ENCODE measurements at regions of chr7 and their contacts with region 1.

Region 1: DNA sequence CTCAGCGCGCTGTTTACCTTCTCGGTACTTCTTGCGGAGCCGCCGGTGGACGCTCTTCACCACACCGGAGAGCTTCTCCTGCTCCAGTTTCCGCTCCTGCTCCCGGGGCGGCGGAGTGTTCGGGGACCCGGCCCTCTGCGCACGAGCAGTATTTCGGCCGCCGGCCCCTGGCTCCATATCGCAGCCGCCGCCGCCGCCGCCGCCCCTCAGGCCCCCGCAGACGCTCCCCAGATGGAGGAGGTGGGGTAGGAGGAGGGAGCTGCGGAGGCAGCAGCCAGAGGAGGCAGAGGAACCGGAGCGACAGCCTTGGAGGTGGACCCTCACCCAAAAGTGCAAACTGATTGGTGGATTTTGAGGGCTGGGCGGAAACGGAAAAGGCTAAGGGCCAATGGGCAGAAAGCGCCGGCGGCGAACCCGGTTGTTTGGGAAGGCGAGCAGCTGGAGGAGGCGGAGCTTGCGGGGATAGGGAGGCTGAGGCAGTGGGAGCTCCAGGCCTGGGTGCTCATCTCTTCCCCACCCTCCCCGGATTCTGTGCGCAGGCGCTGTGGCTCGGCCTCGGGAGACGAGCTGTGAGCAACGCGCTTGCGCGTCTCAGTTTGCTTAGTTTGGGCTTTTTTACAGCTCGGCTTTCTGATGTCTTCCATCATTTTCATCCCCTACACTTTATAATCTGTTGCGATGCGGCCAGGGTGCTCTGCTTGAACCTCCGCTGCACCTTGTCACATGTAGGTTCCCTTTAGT is 146.9 kb downstream of the GPR85 start:
- DNase-seq: peak; percentile 98
- ATAC-seq: peak; percentile 98
- H3K4me3 ChIP-seq: peak overlapping the region; percentile 78 to 86 (median 80)
- H3K27ac ChIP-seq: peak overlapping the region; percentile 54
- H3K4me1 ChIP-seq: peaks cover 22% of the 10 kb centered on the region
- H3K27me3 ChIP-seq: no peaks in the 10 kb centered on the region
- CTCF ChIP-seq: peak; percentile 9; the same call in 1 of the 2 replicates
- EP300 ChIP-seq: no peak
- POLR2A ChIP-seq: peak; percentile 65 to 68
- RAD21 ChIP-seq: no peak

Region 2: GRCh38 chr7:112789817-112790585 is 149.7 kb before region 1 on chr7 and contains the start of gene TMEM168:
- CTCF ChIA-PET with region 1: no interaction called
- POLR2A ChIA-PET with region 1: interaction called, 7 read pairs
- in situ Hi-C with region 1: no loop called
- intact Hi-C with region 1: loop called (anchors 5 kb)
- DNase-seq: peak; percentile 63
- ATAC-seq: peak; percentile 86
- H3K4me3 ChIP-seq: peak within 1 kb of the TSS; percentile 67 to 78 (median 73)
- H3K27ac ChIP-seq: peak within 1 kb of the TSS; percentile 93
- H3K4me1 ChIP-seq: peaks cover 22% of the 10 kb centered on the region
- H3K27me3 ChIP-seq: peaks cover 0 to 2% of the 10 kb centered on the region in 2 experiments; a peak in 1 of 5 replicates
- CTCF ChIP-seq: peak; percentile 25; the same call in 1 of the 2 replicates
- EP300 ChIP-seq: no peak
- POLR2A ChIP-seq: peak; percentile 50 to 74; a peak in 3 of 4 replicates
- RAD21 ChIP-seq: no peak; the same call in 1 of the 2 replicates
- total RNA-seq, gene TMEM168: 5.7 and 8.7 TPM in 2 replicates

Region 3: GRCh38 chr7:112898432-112899290 is 41.1 kb before region 1 on chr7:
- CTCF ChIA-PET with region 1: no interaction called
- POLR2A ChIA-PET with region 1: no interaction called
- in situ Hi-C with region 1: no loop called
- intact Hi-C with region 1: loop called (anchors 1 kb)
- DNase-seq: peak; percentile 79
- ATAC-seq: peak; percentile 92
- H3K4me3 ChIP-seq: peak overlapping the region in 1 of 3 experiments; percentile 35; a peak in 1 of 6 replicates
- H3K27ac ChIP-seq: peak overlapping the region; percentile 80
- H3K4me1 ChIP-seq: peaks cover 39% of the 10 kb centered on the region
- H3K27me3 ChIP-seq: no peaks in the 10 kb centered on the region
- CTCF ChIP-seq: peak; percentile 82
- EP300 ChIP-seq: 0 out of 4 replicates have a peak, but pooled peaks of 1 of the 2 experiments have one; percentile 21
- POLR2A ChIP-seq: no peak
- RAD21 ChIP-seq: peak; percentile 80

Region 4: DNA sequence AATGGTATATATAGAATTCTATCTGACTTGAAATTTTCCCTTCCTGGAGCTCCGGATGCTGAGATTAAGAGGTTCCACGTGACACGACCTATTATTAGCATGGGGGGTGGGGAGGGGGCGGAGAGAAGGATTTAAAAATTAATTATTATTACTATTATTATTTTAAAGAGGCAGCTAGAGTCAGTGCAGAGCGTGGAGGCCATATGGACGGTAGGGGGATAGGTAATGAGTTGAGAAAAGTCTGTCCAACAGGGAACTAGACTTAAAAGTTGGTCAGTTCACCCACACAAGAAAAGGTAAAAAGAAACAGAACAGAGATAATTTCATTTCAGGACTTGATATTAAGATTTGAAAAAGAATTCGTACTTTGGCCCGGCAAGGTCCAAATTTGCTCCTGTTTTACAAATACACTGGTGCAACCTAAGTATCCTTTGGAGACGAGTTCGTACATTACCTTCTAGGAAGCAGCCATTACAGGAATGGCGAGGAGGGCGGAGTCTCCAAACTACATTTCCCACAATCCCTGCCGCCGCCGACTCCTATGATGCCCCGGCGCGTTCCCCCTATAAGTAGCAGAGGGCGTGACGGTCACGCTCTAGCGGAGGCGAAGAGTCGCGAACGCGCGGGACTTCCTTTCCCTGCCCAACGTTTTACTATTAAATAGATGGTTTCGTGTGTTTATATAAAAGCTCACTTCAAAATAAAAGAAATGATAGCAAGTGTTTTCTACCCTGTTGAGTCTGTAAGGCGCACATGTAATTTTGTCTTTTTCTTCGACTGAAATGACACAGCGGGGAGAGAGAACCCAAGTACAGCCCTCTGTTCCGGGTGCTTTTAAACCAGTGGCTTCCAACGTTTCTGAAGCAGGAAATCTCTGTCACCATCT is 178.6 kb after region 1 on chr7 and contains the start of gene SMIM30:
- CTCF ChIA-PET with region 1: no interaction called
- POLR2A ChIA-PET with region 1: no interaction called
- in situ Hi-C with region 1: no loop called
- intact Hi-C with region 1: loop called (anchors 10 kb)
- DNase-seq: peak; percentile 80
- ATAC-seq: peak; percentile 100
- H3K4me3 ChIP-seq: peak within 1 kb of the TSS; percentile 73 to 82 (median 75)
- H3K27ac ChIP-seq: no peak within 1 kb of the TSS
- H3K4me1 ChIP-seq: peaks cover 15% of the 10 kb centered on the region
- H3K27me3 ChIP-seq: no peaks in the 10 kb centered on the region; a peak in 1 of 5 replicates
- CTCF ChIP-seq: peak; percentile 14; the same call in 1 of the 2 replicates
- EP300 ChIP-seq: no peak
- POLR2A ChIP-seq: peak; percentile 52 to 78
- RAD21 ChIP-seq: no peak
- total RNA-seq, gene SMIM30: 23.5 and 32.1 TPM in 2 replicates

Measured in HepG2 (cell line).